ENCODE measurements at regions of chr10 and their contacts with region 1.

Region 1: GRCh38 chr10:60434418-60435046 is 44.9 kb upstream of the ANK3 start:
- DNase-seq: peak; percentile 57
- H3K4me3 Mint-ChIP-seq: no peak overlapping the region
- H3K27ac Mint-ChIP-seq: no peak overlapping the region
- H3K4me1 Mint-ChIP-seq: peaks cover 23% of the 10 kb centered on the region
- H3K27me3 Mint-ChIP-seq: no peaks in the 10 kb centered on the region
- CTCF ChIP-seq: peak; percentile 73

Region 2: GRCh38 chr10:60099998-60100747 is 334.4 kb before region 1 on chr10:
- CTCF ChIA-PET with region 1: interaction called, 3 read pairs
- intact Hi-C with region 1: loop called (anchors 2 kb)
- DNase-seq: peak; percentile 39
- H3K4me3 Mint-ChIP-seq: no peak overlapping the region
- H3K27ac Mint-ChIP-seq: no peak overlapping the region
- H3K4me1 Mint-ChIP-seq: peaks cover 31% of the 10 kb centered on the region
- H3K27me3 Mint-ChIP-seq: no peaks in the 10 kb centered on the region
- CTCF ChIP-seq: peak; percentile 41

Region 3: DNA sequence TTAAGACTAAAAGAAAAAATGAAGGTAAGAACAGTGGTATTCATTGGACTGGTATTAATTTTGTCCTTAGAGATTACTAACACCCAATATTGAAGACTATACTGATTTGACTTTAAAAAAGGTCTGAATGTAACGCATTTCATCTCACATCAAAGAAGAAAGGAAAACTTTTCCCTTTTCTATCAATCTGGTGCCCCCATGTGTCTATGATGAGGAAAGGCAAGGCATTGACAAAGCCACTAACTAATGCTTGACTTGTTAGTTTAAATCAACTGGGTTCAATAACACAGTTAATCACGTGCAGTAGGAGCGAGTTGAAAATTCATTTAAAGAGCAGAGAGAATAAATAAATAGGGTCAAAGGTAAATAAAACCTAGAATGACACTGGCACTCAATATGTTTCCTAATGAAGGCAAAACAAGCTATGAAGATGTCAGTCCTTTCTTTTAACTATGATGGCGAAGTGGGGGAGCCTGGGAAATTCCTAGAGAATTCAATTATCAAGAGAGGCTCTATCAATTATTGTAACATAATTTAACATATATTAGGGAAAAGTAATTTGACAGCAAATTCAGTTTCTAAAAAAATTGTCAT is 225.8 kb before region 1 on chr10:
- CTCF ChIA-PET with region 1: interaction called, 4 read pairs
- intact Hi-C with region 1: loop called (anchors 10 kb)
- DNase-seq: peak; percentile 19
- H3K4me3 Mint-ChIP-seq: no peak overlapping the region
- H3K27ac Mint-ChIP-seq: no peak overlapping the region
- H3K4me1 Mint-ChIP-seq: peaks cover 11% of the 10 kb centered on the region
- H3K27me3 Mint-ChIP-seq: no peaks in the 10 kb centered on the region
- CTCF ChIP-seq: peak; percentile 85

Region 4: DNA sequence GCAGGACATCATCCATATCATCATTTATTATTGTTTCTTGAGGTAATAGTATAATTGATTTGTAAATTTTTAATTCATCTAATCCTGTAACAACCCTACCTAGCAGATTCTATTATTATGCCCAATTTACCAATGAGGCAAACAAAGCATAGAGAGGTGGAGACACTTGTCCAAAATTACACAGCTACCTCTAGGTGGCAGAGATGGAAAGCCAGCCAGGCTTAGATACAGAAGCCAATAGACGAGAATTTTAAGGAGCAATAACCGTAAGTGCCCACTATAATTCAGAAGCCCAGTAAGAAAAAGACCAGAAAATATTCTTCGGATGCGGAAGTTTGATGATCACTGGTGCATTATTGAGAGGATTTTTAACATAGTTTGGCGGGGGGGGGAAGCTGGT is 98.8 kb before region 1 on chr10:
- CTCF ChIA-PET with region 1: interaction called, 4 read pairs
- intact Hi-C with region 1: loop called (anchors 1 kb)
- DNase-seq: peak; percentile 7
- H3K4me3 Mint-ChIP-seq: no peak overlapping the region
- H3K27ac Mint-ChIP-seq: no peak overlapping the region
- H3K4me1 Mint-ChIP-seq: peaks cover 8% of the 10 kb centered on the region
- H3K27me3 Mint-ChIP-seq: no peaks in the 10 kb centered on the region
- CTCF ChIP-seq: no peak

Measured in Calu3 (cell line).